SK-N-SH (cell line): ENCODE measurements at regions of chr7 and their contacts with region 1.

Region 1: GRCh38 chr7:100611974-100612729 is at the start of gene MOSPD3:
- DNase-seq: peak; percentile 100
- H3K4me3 ChIP-seq: peak within 1 kb of the TSS; percentile 67 to 80
- H3K27ac ChIP-seq: peak within 1 kb of the TSS; percentile 82 to 93
- H3K4me1 ChIP-seq: peaks cover 0 to 8% of the 10 kb centered on the region in 2 experiments; a peak in 1 of 4 replicates
- H3K27me3 ChIP-seq: no peaks in the 10 kb centered on the region
- CTCF ChIP-seq: no peak
- EP300 ChIP-seq: 0 out of 4 replicates have a peak, but pooled peaks of 1 of the 2 experiments have one; percentile 37
- RAD21 ChIP-seq: no peak
- polyA plus RNA-seq, gene MOSPD3: 30.0 and 61.7 TPM in 2 replicates

Region 2: GRCh38 chr7:100563809-100564400 is 48.2 kb before region 1 on chr7:
- CTCF ChIA-PET with region 1: interaction called, 21 read pairs
- POLR2A ChIA-PET with region 1: interaction called, 5 read pairs
- DNase-seq: peak; percentile 95
- H3K4me3 ChIP-seq: no peak overlapping the region; a peak in 1 of 4 replicates
- H3K27ac ChIP-seq: no peak overlapping the region; a peak in 1 of 4 replicates
- H3K4me1 ChIP-seq: peaks cover 0 to 24% of the 10 kb centered on the region in 2 experiments; a peak in 1 of 4 replicates
- H3K27me3 ChIP-seq: no peaks in the 10 kb centered on the region
- CTCF ChIP-seq: peak; percentile 98
- EP300 ChIP-seq: no peak
- RAD21 ChIP-seq: peak; percentile 84

Region 3: DNA sequence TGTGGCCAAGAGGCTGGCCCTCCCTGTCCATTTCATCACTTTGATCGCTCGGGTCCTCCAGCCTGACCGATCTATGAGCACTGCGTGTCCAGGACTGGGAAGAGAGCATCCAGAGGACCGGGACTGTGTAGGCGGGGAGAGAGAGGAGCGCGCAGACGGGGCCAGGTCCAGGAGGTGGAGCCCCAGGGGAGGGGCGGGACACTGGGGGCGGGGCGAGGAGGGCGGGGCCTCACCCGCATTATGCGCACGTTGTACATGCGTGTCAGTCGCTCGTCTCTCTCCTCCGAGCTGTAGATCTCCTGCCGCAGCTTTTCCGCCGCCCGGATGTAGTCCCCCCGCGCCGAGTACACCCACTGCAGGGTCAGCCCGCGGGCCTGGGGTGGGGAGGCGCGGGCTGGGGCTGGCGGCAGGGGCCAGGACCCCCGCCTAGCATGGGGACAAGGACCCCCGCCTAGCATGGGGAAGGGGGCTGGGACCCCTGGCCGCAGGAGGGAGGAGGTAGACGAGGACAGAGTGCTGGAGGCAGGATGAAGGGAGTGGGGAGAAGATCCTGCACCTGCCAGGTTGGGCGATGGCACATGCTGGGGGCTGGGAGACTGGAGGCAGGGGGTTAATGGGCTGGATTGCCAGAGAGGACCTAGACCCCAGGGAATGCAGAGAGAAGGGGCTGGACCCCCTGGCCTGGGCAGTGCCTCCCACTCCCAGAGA is 14.5 kb after region 1 on chr7:
- CTCF ChIA-PET with region 1: interaction called, 70 read pairs
- POLR2A ChIA-PET with region 1: interaction called, 14 read pairs
- DNase-seq: peak; percentile 100
- H3K4me3 ChIP-seq: peak overlapping the region; percentile 36 to 58
- H3K27ac ChIP-seq: peak overlapping the region in 1 of 2 experiments; percentile 20; a peak in 1 of 4 replicates
- H3K4me1 ChIP-seq: peaks cover 0 to 10% of the 10 kb centered on the region in 2 experiments; a peak in 1 of 4 replicates
- H3K27me3 ChIP-seq: no peaks in the 10 kb centered on the region
- CTCF ChIP-seq: no peak
- EP300 ChIP-seq: no peak
- RAD21 ChIP-seq: no peak

Region 4: DNA sequence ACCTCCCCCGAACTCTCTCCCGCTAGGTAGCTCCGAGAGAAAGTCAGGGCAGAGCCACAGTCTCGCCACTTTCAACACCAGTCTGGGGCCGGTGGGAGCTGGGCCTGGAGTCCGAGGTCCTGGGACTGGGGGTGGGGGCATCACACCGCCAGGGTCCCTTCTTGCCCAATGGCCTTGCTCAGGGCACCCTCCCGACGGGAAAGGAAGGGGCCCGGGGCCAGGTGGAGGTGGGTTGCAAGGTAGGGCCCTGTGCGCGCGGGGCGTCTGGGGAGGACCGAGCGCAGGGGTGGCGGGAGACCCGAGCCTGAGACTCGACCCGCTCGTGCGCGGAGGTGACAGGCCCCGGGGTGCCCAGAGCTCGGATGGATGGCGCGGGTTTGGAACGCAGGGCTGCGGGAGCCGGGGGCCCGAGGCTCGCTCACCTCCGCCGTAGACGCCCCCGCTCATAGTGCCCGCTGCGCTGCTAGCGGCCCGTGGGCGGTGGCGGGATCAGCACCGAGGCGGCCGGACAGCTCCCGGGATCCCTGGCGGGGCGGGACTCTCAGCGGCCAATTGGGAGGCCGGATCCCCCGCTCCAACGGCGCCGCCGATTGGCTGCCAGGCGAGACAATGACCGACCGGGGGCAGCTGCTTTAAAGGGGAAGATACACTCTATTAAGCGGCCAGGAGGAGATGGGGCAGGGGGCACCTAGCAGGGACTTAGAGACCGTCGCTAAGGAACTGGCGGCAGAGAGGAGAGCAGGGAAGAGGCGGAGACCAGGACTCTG is 43.9 kb after region 1 on chr7 and contains the start of gene ACTL6B:
- CTCF ChIA-PET with region 1: interaction called, 4 read pairs
- POLR2A ChIA-PET with region 1: interaction called, 10 read pairs
- DNase-seq: peak; percentile 100
- H3K4me3 ChIP-seq: peak within 1 kb of the TSS in 1 of 2 experiments; percentile 46; a peak in 2 of 4 replicates
- H3K27ac ChIP-seq: peak within 1 kb of the TSS in 1 of 2 experiments; percentile 40; a peak in 1 of 4 replicates
- H3K4me1 ChIP-seq: peaks cover 0 to 6% of the 10 kb centered on the region in 2 experiments; a peak in 1 of 4 replicates
- H3K27me3 ChIP-seq: peaks cover 17% of the 10 kb centered on the region; the same call in 1 of the 2 replicates
- CTCF ChIP-seq: no peak
- EP300 ChIP-seq: no peak
- RAD21 ChIP-seq: no peak
- polyA plus RNA-seq, gene ACTL6B: 0.67 and 0.93 TPM in 2 replicates

Region 5: GRCh38 chr7:100680167-100680575 is 68.0 kb after region 1 on chr7:
- CTCF ChIA-PET with region 1: interaction called, 10 read pairs
- POLR2A ChIA-PET with region 1: interaction called, 23 read pairs
- DNase-seq: peak; percentile 44
- H3K4me3 ChIP-seq: no peak overlapping the region
- H3K27ac ChIP-seq: no peak overlapping the region; a peak in 1 of 4 replicates
- H3K4me1 ChIP-seq: peaks cover 0 to 35% of the 10 kb centered on the region in 2 experiments; a peak in 1 of 4 replicates
- H3K27me3 ChIP-seq: no peaks in the 10 kb centered on the region
- CTCF ChIP-seq: no peak
- EP300 ChIP-seq: no peak
- RAD21 ChIP-seq: no peak

Region 6: DNA sequence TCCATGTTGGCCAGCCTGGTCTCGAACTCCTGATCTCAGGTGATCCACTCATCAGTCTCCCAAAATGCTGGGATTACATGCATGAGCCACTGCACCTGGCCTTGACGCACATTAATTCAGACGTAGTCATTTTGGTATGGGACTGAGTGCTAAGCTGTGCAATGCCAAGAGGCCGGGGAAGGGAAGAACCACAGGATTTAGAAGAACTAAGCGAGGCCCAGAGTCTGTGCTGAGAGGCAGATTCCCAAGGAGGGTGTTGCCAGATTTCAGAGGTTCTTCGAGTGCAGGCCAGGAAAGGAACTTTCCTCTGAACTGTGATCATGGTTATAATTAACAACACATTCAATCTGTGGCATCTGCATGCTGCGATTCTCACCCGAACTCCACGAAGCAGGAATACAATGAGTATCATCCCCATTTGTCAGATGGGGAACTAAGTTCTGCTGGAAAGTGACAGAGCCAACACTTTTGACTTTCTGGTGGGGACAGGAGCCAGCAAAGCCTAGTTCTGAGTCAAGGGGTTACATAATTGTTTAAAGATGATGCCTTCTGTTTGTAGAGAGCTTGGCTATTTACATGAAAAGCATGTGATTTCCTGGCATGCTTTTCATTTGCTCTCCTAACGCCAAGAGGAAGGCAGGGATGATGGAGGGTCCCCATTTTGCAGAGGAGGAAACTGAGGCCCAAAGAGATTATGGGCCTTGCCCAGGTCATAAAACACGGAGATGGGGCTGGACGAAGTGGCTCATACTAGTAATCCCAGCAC is 115.0 kb after region 1 on chr7:
- CTCF ChIA-PET with region 1: interaction called, 21 read pairs
- POLR2A ChIA-PET with region 1: no interaction called
- DNase-seq: no peak
- H3K4me3 ChIP-seq: no peak overlapping the region
- H3K27ac ChIP-seq: no peak overlapping the region
- H3K4me1 ChIP-seq: no peaks in the 10 kb centered on the region; a peak in 1 of 4 replicates
- H3K27me3 ChIP-seq: peaks cover 4% of the 10 kb centered on the region; the same call in 1 of the 2 replicates
- CTCF ChIP-seq: no peak
- EP300 ChIP-seq: no peak
- RAD21 ChIP-seq: no peak